ENCODE measurements at regions of chr10 and their contacts with region 1.

Region 1: GRCh38 chr10:102352066-102352715 is 43.3 kb upstream of the NFKB2 start:
- DNase-seq: peak; percentile 41
- H3K4me3 Mint-ChIP-seq: no peak overlapping the region
- H3K27ac Mint-ChIP-seq: no peak overlapping the region
- H3K4me1 Mint-ChIP-seq: no peaks in the 10 kb centered on the region
- H3K27me3 Mint-ChIP-seq: no peaks in the 10 kb centered on the region

Region 2: GRCh38 chr10:101453791-101454718 is 898.1 kb before region 1 on chr10:
- intact Hi-C with region 1: no loop called
- DNase-seq: no peak
- H3K4me3 Mint-ChIP-seq: no peak overlapping the region
- H3K27ac Mint-ChIP-seq: no peak overlapping the region
- H3K4me1 Mint-ChIP-seq: peaks cover 19% of the 10 kb centered on the region
- H3K27me3 Mint-ChIP-seq: peaks cover 17% of the 10 kb centered on the region

Region 3: DNA sequence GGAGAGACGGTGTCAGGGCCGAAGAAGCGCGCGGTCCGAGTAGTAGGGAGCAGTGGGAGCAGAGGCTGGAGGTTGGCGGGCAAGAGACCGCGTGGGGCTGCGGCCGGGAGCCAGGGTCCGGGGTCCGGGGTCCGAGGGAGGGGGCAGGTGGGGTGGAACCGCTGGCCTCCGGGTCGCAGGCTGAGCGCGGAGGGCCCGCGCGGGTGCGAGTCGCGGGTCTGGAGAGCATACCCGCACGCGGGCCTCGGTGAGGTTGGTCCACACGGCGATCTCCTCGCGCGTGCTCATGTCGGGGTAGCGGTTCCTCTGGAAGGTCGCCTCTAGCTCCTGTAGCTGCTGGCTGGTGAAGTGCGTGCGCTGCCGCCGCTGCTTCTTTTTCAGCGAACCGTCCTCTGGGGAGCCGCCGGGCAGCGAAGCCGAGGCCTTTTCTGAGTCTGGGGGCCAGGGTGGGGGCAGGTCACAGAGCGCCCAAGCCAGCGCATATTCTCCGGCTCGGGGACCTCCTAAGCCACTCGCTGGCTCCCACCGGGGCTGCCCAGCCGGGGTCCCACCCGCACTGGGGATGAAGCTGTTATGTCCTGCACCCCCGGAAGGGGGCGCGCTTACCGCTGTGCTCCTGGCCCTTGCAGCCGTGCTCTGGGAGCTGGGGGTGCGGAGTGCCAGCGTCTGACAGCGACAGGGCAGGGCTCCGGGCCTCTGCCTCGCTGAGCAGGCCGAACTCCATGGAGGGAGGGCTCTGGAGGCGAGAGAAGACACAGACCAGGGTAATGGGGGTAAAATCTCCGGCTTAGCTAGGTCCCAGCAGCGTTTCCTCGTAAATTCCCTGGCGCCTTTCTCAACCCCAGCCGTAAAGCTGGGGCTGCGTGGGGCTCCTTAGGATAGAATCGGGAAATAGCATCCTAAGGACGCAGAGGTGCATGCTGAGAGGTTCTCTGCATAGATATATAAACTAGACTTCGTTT is 120.6 kb before region 1 on chr10:
- intact Hi-C with region 1: loop called (anchors 1 kb)
- DNase-seq: peak; percentile 65
- H3K4me3 Mint-ChIP-seq: peak overlapping the region; percentile 68
- H3K27ac Mint-ChIP-seq: no peak overlapping the region
- H3K4me1 Mint-ChIP-seq: peaks cover 10% of the 10 kb centered on the region
- H3K27me3 Mint-ChIP-seq: peaks cover 58% of the 10 kb centered on the region

Region 4: GRCh38 chr10:102408728-102409603 is 56.8 kb after region 1 on chr10:
- intact Hi-C with region 1: no loop called
- DNase-seq: peak; percentile 64
- H3K4me3 Mint-ChIP-seq: peak overlapping the region; percentile 87
- H3K27ac Mint-ChIP-seq: peak overlapping the region; percentile 81
- H3K4me1 Mint-ChIP-seq: peaks cover 54% of the 10 kb centered on the region
- H3K27me3 Mint-ChIP-seq: peaks cover 24% of the 10 kb centered on the region

Measured in activated T-helper 1 cell treated with anti-CD3 and anti-CD28 coated beads, Interleukin-12 subunit alpha, Interleukin-12 subunit beta, Interleukin-2, Interleukin-4 antibody, amounts not matched to agents 30 ng/mL and 10 ng/mL and 1 ng/mL, durations not matched to agents 14 hours and 24 hours and 36 hours (primary cell).